Spleen (tissue), 13 donors: ENCODE measurements at regions of chr7 and their contacts with region 1.

Region 1: GRCh38 chr7:13279854-13280435 is 592.5 kb downstream of the ARL4A start:
- DNase-seq: no peak
- H3K4me3 ChIP-seq: no peak overlapping the region
- H3K27ac ChIP-seq: no peak overlapping the region
- H3K4me1 ChIP-seq: no peaks in the 10 kb centered on the region
- H3K27me3 ChIP-seq: no peaks in the 10 kb centered on the region
- CTCF ChIP-seq: peak in 8 of 11 experiments; percentile 16 to 52 (median 40)
- POLR2A ChIP-seq: no peak

Region 2: GRCh38 chr7:13169356-13169755 is 110.6 kb before region 1 on chr7:
- intact Hi-C with region 1: no loop called
- DNase-seq: no peak
- H3K4me3 ChIP-seq: no peak overlapping the region
- H3K27ac ChIP-seq: no peak overlapping the region
- H3K4me1 ChIP-seq: no peaks in the 10 kb centered on the region
- H3K27me3 ChIP-seq: no peaks in the 10 kb centered on the region
- CTCF ChIP-seq: no peak
- POLR2A ChIP-seq: no peak

Region 3: GRCh38 chr7:13731643-13732042 is 451.7 kb after region 1 on chr7:
- intact Hi-C with region 1: loop called (anchors 10 kb)
- DNase-seq: no peak
- H3K4me3 ChIP-seq: no peak overlapping the region
- H3K27ac ChIP-seq: no peak overlapping the region
- H3K4me1 ChIP-seq: no peaks in the 10 kb centered on the region
- H3K27me3 ChIP-seq: no peaks in the 10 kb centered on the region
- CTCF ChIP-seq: no peak
- POLR2A ChIP-seq: no peak

Region 4: GRCh38 chr7:14457568-14458453 is 1177.9 kb after region 1 on chr7:
- intact Hi-C with region 1: loop called (anchors 10 kb)
- DNase-seq: peak; percentile 64
- H3K4me3 ChIP-seq: peak overlapping the region in 1 of 8 donors; percentile 28
- H3K27ac ChIP-seq: no peak overlapping the region
- H3K4me1 ChIP-seq: peaks cover 0 to 6% (median 2%) of the 10 kb centered on the region in 6 donors
- H3K27me3 ChIP-seq: peaks cover 0 to 6% (median 0%) of the 10 kb centered on the region in 7 donors
- CTCF ChIP-seq: peak in 9 of 11 experiments; percentile 19 to 76 (median 64)
- POLR2A ChIP-seq: no peak

Region 5: GRCh38 chr7:14691597-14692203 is 1411.8 kb after region 1 on chr7:
- intact Hi-C with region 1: loop called (anchors 5 kb)
- DNase-seq: no peak
- H3K4me3 ChIP-seq: no peak overlapping the region
- H3K27ac ChIP-seq: no peak overlapping the region
- H3K4me1 ChIP-seq: peaks cover 0 to 23% (median 2%) of the 10 kb centered on the region in 6 donors
- H3K27me3 ChIP-seq: peaks cover 0 to 4% (median 0%) of the 10 kb centered on the region in 7 donors
- CTCF ChIP-seq: peak; percentile 26 to 77 (median 61)
- POLR2A ChIP-seq: no peak